Natural killer cell (primary cell): ENCODE measurements at regions of chr10 and their contacts with region 1.

Region 1: GRCh38 chr10:107914450-107915214 is 750.1 kb upstream of the SORCS1 start:
- DNase-seq: no peak
- ATAC-seq: no peak
- H3K4me3 ChIP-seq: no peak overlapping the region
- H3K4me3 Mint-ChIP-seq: no peak overlapping the region
- H3K27ac ChIP-seq: no peak overlapping the region
- H3K27ac Mint-ChIP-seq: no peak overlapping the region
- H3K4me1 ChIP-seq: no peaks in the 10 kb centered on the region
- H3K4me1 Mint-ChIP-seq: no peaks in the 10 kb centered on the region
- H3K27me3 ChIP-seq: peaks cover 4% of the 10 kb centered on the region
- H3K27me3 Mint-ChIP-seq: peaks cover 3 to 9% of the 10 kb centered on the region in 2 donors
- CTCF ChIP-seq: no peak

Region 2: DNA sequence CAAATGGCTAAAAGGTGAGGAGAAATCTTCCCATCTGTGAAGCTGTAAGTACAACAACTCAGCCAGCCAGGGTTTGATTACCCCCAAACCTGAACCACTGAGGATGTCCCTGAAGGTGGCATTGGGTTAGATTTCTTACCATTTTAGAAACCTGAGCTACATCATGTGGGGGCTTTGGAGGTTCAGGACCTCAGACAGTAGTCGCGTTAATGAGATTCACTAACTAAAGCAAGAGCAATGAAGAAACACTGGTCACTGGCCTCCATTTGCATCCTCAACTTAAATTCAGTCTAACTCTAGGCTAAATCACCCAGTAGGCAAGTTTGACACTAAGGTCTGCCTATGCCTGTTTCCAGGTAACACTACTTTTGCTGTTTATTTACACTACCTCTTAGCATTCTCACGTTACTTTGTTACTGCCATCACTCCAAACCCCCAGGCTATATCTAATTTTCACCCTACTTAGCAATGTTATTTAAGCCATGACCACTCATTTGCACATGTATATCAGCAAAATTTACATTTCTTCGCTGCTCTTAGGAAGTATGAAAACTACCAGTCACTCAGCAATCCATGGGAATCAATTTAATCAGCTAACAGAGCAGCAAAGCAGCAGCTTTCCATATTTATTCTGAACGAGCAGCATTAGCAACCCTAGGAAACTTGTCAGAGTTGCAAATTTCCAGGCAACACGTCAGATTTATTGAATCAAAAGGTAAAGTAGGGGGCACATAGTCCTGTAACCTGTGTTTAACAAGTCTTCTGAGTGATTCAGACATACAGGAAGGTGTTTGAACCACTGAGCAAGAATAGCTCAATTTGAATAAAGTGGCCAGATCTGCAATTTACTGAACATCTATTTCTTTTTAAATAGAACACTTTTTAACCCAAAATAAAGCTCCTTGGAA is 38.3 kb after region 1 on chr10:
- intact Hi-C with region 1: loop called (anchors 5 kb)
- DNase-seq: no peak
- ATAC-seq: no peak
- H3K4me3 ChIP-seq: no peak overlapping the region
- H3K4me3 Mint-ChIP-seq: no peak overlapping the region
- H3K27ac ChIP-seq: no peak overlapping the region
- H3K27ac Mint-ChIP-seq: no peak overlapping the region
- H3K4me1 ChIP-seq: no peaks in the 10 kb centered on the region
- H3K4me1 Mint-ChIP-seq: no peaks in the 10 kb centered on the region
- H3K27me3 ChIP-seq: no peaks in the 10 kb centered on the region
- H3K27me3 Mint-ChIP-seq: no peaks in the 10 kb centered on the region
- CTCF ChIP-seq: no peak

Region 3: DNA sequence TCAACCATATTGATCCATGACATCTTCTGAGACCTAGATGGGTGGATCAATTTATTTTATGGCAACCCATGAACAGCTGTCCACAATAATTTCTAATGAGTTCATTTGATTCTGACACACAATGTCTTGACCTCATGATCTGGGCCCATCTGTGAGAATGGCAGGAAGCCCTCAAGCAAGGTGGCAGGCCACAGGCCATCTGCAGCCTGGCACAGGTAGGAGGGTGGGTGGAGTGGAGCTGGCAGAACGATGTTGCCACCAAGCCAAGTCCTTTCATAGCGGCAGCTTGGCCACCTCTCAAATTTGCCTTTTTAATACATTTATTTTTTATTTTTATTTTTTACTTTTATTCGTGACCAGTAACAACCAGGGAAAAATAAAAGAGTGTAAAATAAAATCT is 431.4 kb after region 1 on chr10:
- intact Hi-C with region 1: no loop called
- DNase-seq: no peak
- ATAC-seq: no peak
- H3K4me3 ChIP-seq: no peak overlapping the region
- H3K4me3 Mint-ChIP-seq: no peak overlapping the region
- H3K27ac ChIP-seq: no peak overlapping the region
- H3K27ac Mint-ChIP-seq: no peak overlapping the region
- H3K4me1 ChIP-seq: no peaks in the 10 kb centered on the region
- H3K4me1 Mint-ChIP-seq: no peaks in the 10 kb centered on the region
- H3K27me3 ChIP-seq: no peaks in the 10 kb centered on the region
- H3K27me3 Mint-ChIP-seq: no peaks in the 10 kb centered on the region
- CTCF ChIP-seq: no peak